Endothelial cell of umbilical vein (primary cell): ENCODE measurements at regions of chr16 and their contacts with region 1.

Region 1: GRCh38 chr16:29700253-29700987 is 21.4 kb downstream of the QPRT start:
- DNase-seq: peak; percentile 92
- H3K4me3 ChIP-seq: no peak overlapping the region
- H3K27ac ChIP-seq: no peak overlapping the region
- H3K4me1 ChIP-seq: peaks cover 5% of the 10 kb centered on the region
- H3K27me3 ChIP-seq: peaks cover 0 to 1% of the 10 kb centered on the region in 2 experiments
- CTCF ChIP-seq: peak; percentile 82 to 85
- POLR2A ChIP-seq: no peak

Region 2: GRCh38 chr16:29686740-29687332 is 13.6 kb before region 1 on chr16:
- CTCF ChIA-PET with region 1: interaction called, 20 read pairs
- POLR2A ChIA-PET with region 1: no interaction called
- dilution Hi-C with region 1: no loop called
- intact Hi-C with region 1: no loop called
- DNase-seq: no peak
- H3K4me3 ChIP-seq: no peak overlapping the region
- H3K27ac ChIP-seq: no peak overlapping the region
- H3K4me1 ChIP-seq: no peaks in the 10 kb centered on the region
- H3K27me3 ChIP-seq: no peaks in the 10 kb centered on the region
- CTCF ChIP-seq: no peak
- POLR2A ChIP-seq: no peak

Region 3: DNA sequence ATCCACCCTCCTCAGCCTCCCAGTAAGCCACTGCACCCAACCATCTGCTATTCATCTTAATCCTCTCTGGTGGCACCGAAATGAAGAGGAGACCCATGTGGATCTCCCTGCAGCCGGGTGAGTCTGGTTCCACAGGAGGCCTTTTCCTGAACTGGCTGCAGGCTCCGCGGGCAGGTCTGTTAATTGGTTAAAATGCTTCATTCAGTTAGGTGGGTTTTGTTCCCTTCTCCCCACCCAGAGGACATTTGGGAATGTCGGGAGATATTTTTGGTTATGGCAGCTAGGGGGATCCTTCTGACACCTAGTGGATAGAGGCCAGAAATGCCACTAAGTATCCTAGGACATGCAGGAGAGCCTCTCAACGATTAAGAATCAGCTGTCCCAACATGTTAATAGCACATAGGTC is 28.7 kb after region 1 on chr16:
- CTCF ChIA-PET with region 1: interaction called, 89 read pairs
- POLR2A ChIA-PET with region 1: no interaction called
- dilution Hi-C with region 1: no loop called
- intact Hi-C with region 1: loop called (anchors 1 kb)
- DNase-seq: peak; percentile 43
- H3K4me3 ChIP-seq: no peak overlapping the region
- H3K27ac ChIP-seq: no peak overlapping the region
- H3K4me1 ChIP-seq: no peaks in the 10 kb centered on the region
- H3K27me3 ChIP-seq: peaks cover 2 to 6% of the 10 kb centered on the region in 2 experiments
- CTCF ChIP-seq: peak; percentile 41 to 66
- POLR2A ChIP-seq: no peak

Region 4: DNA sequence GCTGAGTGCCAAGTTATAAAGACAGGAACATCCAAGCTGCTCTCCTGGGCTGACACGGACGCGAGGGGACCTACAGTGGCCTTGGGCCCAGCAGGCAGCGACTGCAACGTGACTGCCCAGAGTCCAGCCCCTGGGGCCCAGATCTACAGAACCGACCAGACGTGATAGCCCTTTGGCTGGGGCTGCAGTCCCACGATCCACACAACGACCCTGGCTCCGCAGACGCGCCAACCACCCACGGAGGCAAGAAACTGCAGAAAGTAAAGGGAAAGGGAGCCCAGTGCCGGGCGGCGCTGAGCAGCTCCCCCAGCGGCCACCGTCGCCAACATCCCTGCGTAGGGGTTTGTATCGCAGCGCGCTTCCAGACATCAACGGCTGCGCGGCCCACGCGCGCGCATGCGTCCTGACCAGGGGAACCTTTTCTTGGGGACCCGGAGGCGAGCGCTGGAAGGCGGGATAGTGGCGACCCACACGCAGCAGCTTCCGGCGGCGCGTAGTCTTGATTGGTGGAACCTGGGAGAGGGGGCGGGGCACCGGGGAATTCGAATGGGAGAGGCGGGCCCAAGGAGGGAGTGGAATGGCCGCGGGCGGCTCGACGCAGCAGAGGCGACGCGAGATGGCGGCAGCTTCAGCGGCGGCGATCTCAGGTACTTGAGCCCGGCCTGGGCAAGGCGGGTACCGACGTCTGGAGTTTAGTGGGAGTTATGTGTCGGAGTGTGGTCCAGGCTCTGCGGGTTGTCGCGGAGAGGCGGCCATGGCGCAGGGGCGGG is 89.9 kb after region 1 on chr16 and contains the start of gene KIF22:
- CTCF ChIA-PET with region 1: interaction called, 19 read pairs
- POLR2A ChIA-PET with region 1: no interaction called
- dilution Hi-C with region 1: no loop called
- intact Hi-C with region 1: loop called (anchors 2 kb)
- DNase-seq: peak; percentile 99
- H3K4me3 ChIP-seq: peak within 1 kb of the TSS; percentile 80 to 93 (median 88)
- H3K27ac ChIP-seq: peak within 1 kb of the TSS; percentile 13
- H3K4me1 ChIP-seq: peaks cover 23% of the 10 kb centered on the region
- H3K27me3 ChIP-seq: no peaks in the 10 kb centered on the region
- CTCF ChIP-seq: peak; percentile 85 to 90
- POLR2A ChIP-seq: peak; percentile 70
- total RNA-seq, gene KIF22: 82.3 and 90.0 TPM in 2 replicates

Region 5: DNA sequence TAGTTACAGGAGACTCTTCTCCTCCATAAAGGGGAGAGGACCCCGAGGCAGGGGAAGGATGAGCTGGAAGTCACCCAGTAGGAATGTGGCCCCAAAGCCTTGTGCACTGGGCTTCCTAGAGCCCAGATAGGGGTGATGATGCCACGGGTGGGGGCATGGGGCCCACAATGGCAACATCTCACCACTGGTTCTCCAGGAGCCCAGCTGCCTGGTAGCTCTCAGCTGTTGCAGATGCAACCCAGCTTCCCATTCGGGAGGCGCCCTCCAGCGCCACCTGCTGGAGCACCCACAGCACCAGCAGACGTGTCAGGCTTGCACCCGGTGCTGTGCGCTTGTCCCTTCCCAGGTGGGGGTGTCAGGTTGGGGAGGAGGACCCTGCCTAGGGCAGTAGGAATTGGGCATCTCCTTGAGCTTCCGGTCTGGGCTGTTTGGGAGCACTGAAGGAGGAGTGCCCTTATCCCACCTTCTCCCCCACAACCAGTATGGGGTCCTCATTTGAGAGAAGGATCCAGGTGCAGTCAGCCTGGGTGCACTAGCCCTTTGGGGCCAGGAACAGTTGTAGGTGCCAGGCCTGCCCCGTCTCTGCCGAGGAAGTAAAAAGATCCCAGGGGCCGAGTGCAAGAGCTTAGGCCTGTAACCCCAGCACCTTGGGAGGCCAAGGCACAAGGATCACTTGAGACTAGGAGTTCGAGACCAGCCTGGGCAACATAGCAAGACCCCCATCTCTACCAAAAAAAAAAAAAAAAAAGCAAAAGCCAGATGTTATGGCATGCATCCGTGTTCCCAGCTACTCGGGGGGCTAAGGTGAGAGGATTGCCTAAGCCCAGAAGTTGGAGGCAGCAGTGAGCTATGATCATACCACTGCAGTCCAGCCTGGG is 148.2 kb after region 1 on chr16:
- CTCF ChIA-PET with region 1: interaction called, 92 read pairs
- POLR2A ChIA-PET with region 1: interaction called, 6 read pairs
- dilution Hi-C with region 1: no loop called
- intact Hi-C with region 1: loop called (anchors 1 kb)
- DNase-seq: peak; percentile 63
- H3K4me3 ChIP-seq: no peak overlapping the region
- H3K27ac ChIP-seq: no peak overlapping the region
- H3K4me1 ChIP-seq: peaks cover 5% of the 10 kb centered on the region
- H3K27me3 ChIP-seq: no peaks in the 10 kb centered on the region
- CTCF ChIP-seq: peak; percentile 83 to 97
- POLR2A ChIP-seq: no peak

Region 6: DNA sequence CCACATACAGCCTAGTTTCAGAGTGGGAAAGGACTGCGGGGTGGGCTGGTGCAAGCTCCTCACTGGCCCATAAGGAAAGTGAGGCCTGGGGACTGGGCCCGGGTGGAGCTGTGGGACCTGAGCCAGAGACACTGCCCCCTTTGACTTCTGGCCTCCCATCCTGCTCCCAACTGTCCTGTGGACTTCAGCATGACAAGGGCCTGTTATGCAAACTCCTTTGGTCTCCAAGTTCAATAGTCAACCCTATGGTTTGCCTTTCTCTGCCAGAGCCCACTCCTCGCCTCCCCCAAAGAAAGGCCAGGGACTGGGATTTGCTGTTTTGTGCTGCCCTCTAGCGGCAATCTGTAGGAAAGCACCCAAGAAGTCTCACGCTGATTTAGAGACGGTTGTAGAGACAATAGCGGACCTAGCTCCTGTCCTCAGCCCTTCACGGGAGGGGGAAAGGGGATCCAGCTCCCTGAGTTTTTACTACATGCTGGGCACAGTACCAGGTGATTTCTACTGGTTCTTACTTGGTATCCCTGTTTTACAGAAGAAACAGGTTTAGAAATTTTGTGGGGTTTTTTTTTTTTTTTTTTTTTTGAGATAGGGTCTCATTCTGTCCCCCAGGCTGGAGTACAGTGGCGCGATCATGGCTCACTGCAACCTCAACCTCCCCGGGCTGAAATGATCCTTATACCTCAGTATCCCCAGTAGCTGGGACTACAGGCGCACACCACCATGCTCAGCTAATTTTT is 331.8 kb after region 1 on chr16:
- CTCF ChIA-PET with region 1: interaction called, 79 read pairs
- POLR2A ChIA-PET with region 1: no interaction called
- dilution Hi-C with region 1: no loop called
- intact Hi-C with region 1: loop called (anchors 1 kb)
- DNase-seq: peak; percentile 56
- H3K4me3 ChIP-seq: no peak overlapping the region
- H3K27ac ChIP-seq: no peak overlapping the region
- H3K4me1 ChIP-seq: no peaks in the 10 kb centered on the region
- H3K27me3 ChIP-seq: peaks cover 19 to 20% of the 10 kb centered on the region in 2 experiments
- CTCF ChIP-seq: peak; percentile 75 to 80
- POLR2A ChIP-seq: no peak